HEK293T (cell line): ENCODE measurements at regions of chr11 and their contacts with region 1.

Region 1: GRCh38 chr11:114977651-114978050 is 299.3 kb downstream of the NXPE2 start:
- DNase-seq: no peak

Region 2: GRCh38 chr11:114377612-114378267 is 599.9 kb before region 1 on chr11:
- CTCF ChIA-PET with region 1: interaction called, 12 read pairs
- POLR2A ChIA-PET with region 1: no interaction called
- DNase-seq: no peak